ENCODE measurements at regions of chr12 and their contacts with region 1.

Region 1: DNA sequence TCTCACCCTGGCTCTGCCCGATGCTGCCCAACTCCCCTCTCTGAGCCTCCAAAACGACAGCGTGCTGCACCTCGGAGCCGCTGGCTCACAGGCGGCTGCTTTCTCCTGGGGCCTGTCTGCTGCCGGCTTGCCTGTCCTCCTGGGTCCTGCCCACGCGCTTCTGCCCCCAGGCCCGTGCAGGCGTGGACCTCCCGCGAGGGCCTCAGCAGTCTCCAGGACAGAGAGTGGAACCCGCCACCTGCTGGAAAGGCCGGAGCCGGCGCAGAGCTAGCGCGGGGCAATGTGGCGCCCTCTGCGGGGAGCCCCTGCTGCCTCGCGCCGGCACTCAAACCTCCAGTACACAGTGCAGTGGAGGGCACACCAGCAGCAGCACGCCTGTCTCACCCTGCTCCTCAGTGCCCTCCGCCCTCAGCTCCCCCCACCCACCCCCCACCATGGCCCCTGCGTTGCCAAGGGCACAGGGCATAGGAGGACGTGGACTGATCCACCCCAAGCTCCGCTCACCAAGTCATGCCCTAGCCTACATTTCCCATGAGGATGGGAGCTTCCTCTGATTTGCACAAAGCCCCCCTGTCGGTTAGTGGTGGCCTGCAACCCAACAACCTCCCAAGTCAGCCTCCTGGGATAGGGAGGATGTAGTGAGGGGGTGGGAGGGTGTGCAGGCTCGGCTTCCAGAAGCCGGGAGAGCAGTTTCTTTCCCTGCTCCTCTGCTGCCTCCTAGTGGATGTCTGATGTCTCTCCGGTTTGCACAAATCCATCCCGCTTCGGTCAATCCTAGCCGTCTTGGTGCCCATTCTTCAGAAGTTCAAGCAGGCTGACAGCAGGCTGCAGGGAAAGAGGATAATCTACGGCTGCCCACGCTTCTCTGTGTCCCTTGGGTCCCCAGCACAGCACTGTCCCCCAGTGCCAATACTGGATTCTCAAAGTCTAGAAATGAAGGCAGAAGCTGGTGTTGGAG is 25.2 kb downstream of the KRT8 start:
- DNase-seq: peak; percentile 83
- H3K4me3 Mint-ChIP-seq: peak overlapping the region; percentile 65
- H3K27ac Mint-ChIP-seq: no peak overlapping the region
- H3K4me1 Mint-ChIP-seq: peaks cover 7% of the 10 kb centered on the region
- H3K27me3 Mint-ChIP-seq: peaks cover 2% of the 10 kb centered on the region

Region 2: GRCh38 chr12:52327052-52327829 is 552.4 kb before region 1 on chr12:
- CTCF ChIA-PET with region 1: interaction called, 10 read pairs
- POLR2A ChIA-PET with region 1: no interaction called
- intact Hi-C with region 1: no loop called
- DNase-seq: peak; percentile 88
- H3K4me3 Mint-ChIP-seq: no peak overlapping the region
- H3K27ac Mint-ChIP-seq: no peak overlapping the region
- H3K4me1 Mint-ChIP-seq: peaks cover 10% of the 10 kb centered on the region
- H3K27me3 Mint-ChIP-seq: peaks cover 7% of the 10 kb centered on the region

Region 3: DNA sequence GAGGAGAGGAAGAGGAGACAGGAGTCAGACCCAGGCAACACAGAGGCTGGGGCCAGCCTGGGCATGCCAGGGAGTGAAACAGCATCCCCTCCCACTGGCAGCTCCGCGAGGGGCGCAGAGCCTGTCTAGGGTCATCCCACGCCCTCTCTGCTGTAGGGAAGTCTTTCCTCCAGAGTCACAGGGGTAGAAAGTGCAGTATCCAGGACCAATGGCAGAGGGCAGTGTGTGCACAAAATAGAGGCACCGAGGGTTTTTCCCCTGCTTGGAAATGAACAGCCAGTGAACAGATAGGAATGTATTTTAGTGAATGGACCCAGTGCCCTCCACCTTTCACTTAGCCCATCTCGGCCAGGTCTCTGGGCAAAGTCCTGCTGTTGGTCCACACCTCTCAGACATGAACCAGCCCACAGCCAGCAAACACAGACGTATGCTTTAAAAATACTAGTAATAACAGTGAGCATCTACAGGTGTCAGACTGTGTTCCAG is 296.7 kb before region 1 on chr12:
- CTCF ChIA-PET with region 1: interaction called, 141 read pairs
- POLR2A ChIA-PET with region 1: no interaction called
- intact Hi-C with region 1: loop called (anchors 1 kb)
- DNase-seq: peak; percentile 74
- H3K4me3 Mint-ChIP-seq: no peak overlapping the region
- H3K27ac Mint-ChIP-seq: no peak overlapping the region
- H3K4me1 Mint-ChIP-seq: peaks cover 22% of the 10 kb centered on the region
- H3K27me3 Mint-ChIP-seq: no peaks in the 10 kb centered on the region

Region 4: DNA sequence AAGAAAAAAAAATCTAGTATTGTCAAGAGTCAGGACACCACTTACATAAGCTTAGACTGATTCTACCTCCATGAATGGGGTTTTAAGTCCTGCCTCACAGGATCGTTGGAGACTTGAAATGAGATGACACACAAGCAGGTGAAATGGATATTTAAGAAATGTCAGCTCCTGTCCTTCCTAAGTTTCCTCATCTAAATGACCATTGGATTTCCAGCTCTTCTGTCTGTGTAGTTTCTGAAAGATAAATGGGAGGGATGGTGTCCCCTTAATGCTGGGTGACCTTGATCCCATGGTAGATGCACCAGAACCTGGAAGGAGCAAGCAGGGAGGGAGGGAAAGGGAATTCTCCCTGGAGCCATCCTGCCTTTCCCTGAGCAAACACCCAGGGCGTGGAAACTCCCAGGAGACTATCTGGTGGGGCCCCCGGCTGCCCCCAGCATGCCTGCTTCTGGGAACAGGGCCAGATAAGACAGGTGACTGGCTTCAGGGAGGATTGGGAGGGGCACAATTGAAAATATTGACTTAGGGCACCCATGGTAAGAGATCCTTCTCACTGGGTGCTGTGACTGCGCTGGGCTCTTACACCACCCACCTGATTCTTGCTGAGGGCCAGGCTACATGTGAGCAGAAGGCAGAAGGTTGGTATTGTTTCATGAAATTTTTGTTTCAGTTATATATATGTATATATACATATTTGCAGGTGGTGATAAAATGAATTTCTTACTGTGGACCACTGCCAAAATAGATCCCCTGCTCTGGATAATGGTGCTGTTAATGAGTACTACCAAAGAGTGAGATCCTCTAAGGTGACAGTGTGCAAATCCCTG is 15.6 kb after region 1 on chr12:
- CTCF ChIA-PET with region 1: interaction called, 39 read pairs
- POLR2A ChIA-PET with region 1: no interaction called
- intact Hi-C with region 1: no loop called
- DNase-seq: no peak
- H3K4me3 Mint-ChIP-seq: no peak overlapping the region
- H3K27ac Mint-ChIP-seq: no peak overlapping the region
- H3K4me1 Mint-ChIP-seq: no peaks in the 10 kb centered on the region
- H3K27me3 Mint-ChIP-seq: peaks cover 4% of the 10 kb centered on the region

Region 5: GRCh38 chr12:52969828-52970569 is 90.3 kb after region 1 on chr12:
- CTCF ChIA-PET with region 1: interaction called, 11 read pairs
- POLR2A ChIA-PET with region 1: no interaction called
- intact Hi-C with region 1: no loop called
- DNase-seq: no peak
- H3K4me3 Mint-ChIP-seq: no peak overlapping the region
- H3K27ac Mint-ChIP-seq: no peak overlapping the region
- H3K4me1 Mint-ChIP-seq: no peaks in the 10 kb centered on the region
- H3K27me3 Mint-ChIP-seq: peaks cover 6% of the 10 kb centered on the region

Region 6: DNA sequence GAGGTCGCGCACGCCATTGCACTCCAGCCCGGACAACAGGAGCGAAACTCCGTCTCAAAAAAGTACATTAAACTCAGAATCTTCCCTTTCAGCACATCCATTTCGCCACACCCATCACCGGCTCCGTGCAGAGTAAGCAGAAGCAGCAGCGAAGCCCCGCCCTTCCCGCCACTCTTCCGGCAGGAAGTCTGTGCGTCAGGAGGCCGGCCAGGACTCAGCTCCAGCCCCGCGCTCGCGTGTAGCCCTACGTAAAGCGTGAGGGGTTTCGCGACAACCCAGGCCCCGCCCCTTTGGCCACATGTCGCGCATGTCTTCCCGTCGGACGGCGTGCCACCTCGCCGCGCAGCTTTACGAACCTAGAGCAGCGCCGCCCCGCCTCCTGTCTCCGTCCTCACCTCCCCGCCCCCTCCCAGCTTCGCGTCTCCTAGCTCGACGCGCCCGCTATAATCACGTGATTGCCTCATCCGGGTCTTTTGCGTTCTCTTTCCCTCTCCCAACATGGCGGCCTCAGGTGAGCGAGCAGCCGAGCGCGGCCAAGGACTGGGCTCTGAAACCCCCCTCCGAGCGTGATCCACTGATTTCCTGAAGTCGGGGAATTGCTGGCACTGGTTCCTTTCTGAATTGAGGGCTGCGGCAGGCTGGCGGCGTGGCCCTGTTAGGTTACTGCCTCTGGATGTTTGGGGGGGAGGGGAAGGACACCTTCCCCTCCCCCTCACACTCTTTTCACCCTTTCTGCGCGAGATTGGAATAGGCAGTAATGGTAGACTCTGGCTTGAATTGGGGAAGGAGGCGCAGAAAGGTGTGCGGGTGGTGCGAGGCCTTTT is 126.5 kb after region 1 on chr12 and contains the start of gene EIF4B:
- CTCF ChIA-PET with region 1: interaction called, 10 read pairs
- POLR2A ChIA-PET with region 1: no interaction called
- intact Hi-C with region 1: no loop called
- DNase-seq: peak; percentile 100
- H3K4me3 Mint-ChIP-seq: peak within 1 kb of the TSS; percentile 98
- H3K27ac Mint-ChIP-seq: peak within 1 kb of the TSS; percentile 98
- H3K4me1 Mint-ChIP-seq: peaks cover 50% of the 10 kb centered on the region
- H3K27me3 Mint-ChIP-seq: no peaks in the 10 kb centered on the region
- total RNA-seq, gene EIF4B: 686 to 718 TPM

Measured in activated CD4-positive, alpha-beta memory T cell treated with anti-CD3 and anti-CD28 coated beads for 36 hours (primary cell).